Naive thymus-derived CD4-positive, alpha-beta T cell (primary cell): ENCODE measurements at regions of chr3 and their contacts with region 1.

Region 1: GRCh38 chr3:98233468-98233867 is 30.6 kb upstream of the OR5H6 start:
- DNase-seq: no peak
- ATAC-seq: no peak
- H3K4me3 ChIP-seq: no peak overlapping the region
- H3K4me3 Mint-ChIP-seq: no peak overlapping the region
- H3K27ac ChIP-seq: no peak overlapping the region
- H3K27ac Mint-ChIP-seq: no peak overlapping the region
- H3K4me1 ChIP-seq: no peaks in the 10 kb centered on the region
- H3K4me1 Mint-ChIP-seq: no peaks in the 10 kb centered on the region
- H3K27me3 ChIP-seq: no peaks in the 10 kb centered on the region
- H3K27me3 Mint-ChIP-seq: peaks cover 4 to 13% (median 6%) of the 10 kb centered on the region in 5 donors

Region 2: DNA sequence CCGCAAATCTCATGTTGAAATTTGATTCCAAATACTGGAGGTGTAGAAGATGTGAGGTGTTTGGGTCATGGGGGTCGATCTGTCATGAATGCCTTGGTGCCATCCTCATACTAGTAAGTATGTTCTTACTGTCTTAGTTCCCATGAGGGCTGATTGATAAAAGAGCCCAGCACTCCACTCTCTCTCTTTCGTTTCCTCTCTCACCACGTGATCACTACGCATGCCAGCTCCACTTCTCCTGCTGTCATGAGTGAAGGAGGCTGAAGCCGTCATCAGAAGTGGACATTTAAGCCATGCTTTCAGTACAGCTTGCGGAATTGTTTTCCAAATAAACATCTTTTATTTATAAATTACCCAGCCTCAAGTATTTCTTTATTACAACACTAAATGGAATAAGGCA is 60.8 kb before region 1 on chr3:
- CTCF ChIA-PET with region 1: no interaction called
- POLR2A ChIA-PET with region 1: no interaction called
- intact Hi-C with region 1: no loop called
- DNase-seq: no peak
- ATAC-seq: no peak
- H3K4me3 ChIP-seq: no peak overlapping the region
- H3K4me3 Mint-ChIP-seq: no peak overlapping the region
- H3K27ac ChIP-seq: no peak overlapping the region
- H3K27ac Mint-ChIP-seq: no peak overlapping the region
- H3K4me1 ChIP-seq: no peaks in the 10 kb centered on the region
- H3K4me1 Mint-ChIP-seq: peaks cover 0 to 3% (median 0%) of the 10 kb centered on the region in 7 donors
- H3K27me3 ChIP-seq: no peaks in the 10 kb centered on the region
- H3K27me3 Mint-ChIP-seq: peaks cover 0 to 9% (median 3%) of the 10 kb centered on the region in 5 donors

Region 3: DNA sequence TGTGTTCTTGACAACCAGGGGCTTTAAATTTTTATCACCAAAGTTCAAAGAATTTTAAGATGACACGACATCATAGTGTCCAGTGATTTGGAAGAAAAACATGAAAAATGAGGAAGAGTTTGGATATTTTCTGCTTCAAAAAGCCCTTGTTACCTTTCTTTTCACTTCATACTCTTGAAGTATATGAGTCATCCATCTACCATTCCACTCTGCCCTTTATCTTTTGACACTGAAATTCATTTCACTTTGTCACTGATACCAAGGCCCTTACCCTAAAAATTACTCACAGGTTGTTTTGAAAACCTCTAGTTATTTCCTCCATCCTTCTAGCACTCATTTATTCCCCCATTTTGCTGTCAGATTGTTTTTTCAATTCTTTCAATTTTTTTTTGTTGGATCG is 24.2 kb before region 1 on chr3:
- CTCF ChIA-PET with region 1: no interaction called
- POLR2A ChIA-PET with region 1: no interaction called
- intact Hi-C with region 1: loop called in 1 of 2 experiments (anchors 2 kb)
- DNase-seq: no peak
- ATAC-seq: no peak
- H3K4me3 ChIP-seq: no peak overlapping the region
- H3K4me3 Mint-ChIP-seq: no peak overlapping the region
- H3K27ac ChIP-seq: no peak overlapping the region
- H3K27ac Mint-ChIP-seq: no peak overlapping the region
- H3K4me1 ChIP-seq: no peaks in the 10 kb centered on the region
- H3K4me1 Mint-ChIP-seq: no peaks in the 10 kb centered on the region
- H3K27me3 ChIP-seq: no peaks in the 10 kb centered on the region
- H3K27me3 Mint-ChIP-seq: peaks cover 0 to 11% (median 0%) of the 10 kb centered on the region in 5 donors